HEK293T (cell line): ENCODE measurements at regions of chr7 and their contacts with region 1.

Region 1: DNA sequence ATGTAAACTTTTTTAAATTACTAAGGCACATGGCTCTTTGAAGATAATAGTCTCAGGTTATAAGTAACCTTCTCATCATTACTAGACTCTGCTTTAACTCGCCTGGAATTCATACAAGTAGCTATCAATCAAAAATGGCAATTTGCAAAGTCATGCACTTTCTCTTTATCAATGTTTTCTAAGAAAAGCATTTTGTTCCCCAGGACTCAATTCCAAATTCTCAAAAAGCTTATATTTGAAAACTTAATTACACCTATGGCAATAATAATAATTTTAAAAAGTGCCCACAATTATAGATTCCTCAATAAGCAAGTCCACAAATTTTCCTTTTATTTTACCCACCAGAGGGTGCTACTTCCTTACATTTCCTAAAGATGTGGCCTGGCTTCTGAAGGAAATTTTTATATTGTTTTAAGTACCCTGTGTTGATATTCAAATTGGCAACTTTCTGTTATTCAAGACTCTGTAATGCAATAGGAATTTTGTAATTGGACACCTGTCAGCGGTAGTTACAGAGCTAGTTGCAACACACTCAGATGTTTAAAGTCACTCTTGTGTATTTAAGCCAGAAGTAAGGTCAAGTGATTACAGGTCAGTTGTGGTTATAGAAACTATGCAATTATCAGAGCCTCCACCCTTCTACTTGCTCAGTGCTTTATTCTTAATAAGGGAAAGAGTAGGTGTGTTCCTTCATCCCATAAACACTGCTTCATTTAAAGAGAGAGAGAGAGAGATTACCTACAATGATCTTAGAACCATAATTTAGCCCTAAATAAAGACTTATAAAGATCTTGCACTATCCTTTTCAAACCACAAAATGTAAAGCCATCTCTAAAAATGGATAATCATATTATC is 47.1 kb upstream of the HYAL4 start:
- DNase-seq: peak; percentile 24

Region 2: GRCh38 chr7:123865517-123866117 is 67.7 kb after region 1 on chr7:
- CTCF ChIA-PET with region 1: interaction called, 20 read pairs
- POLR2A ChIA-PET with region 1: no interaction called
- DNase-seq: peak; percentile 44

Region 3: DNA sequence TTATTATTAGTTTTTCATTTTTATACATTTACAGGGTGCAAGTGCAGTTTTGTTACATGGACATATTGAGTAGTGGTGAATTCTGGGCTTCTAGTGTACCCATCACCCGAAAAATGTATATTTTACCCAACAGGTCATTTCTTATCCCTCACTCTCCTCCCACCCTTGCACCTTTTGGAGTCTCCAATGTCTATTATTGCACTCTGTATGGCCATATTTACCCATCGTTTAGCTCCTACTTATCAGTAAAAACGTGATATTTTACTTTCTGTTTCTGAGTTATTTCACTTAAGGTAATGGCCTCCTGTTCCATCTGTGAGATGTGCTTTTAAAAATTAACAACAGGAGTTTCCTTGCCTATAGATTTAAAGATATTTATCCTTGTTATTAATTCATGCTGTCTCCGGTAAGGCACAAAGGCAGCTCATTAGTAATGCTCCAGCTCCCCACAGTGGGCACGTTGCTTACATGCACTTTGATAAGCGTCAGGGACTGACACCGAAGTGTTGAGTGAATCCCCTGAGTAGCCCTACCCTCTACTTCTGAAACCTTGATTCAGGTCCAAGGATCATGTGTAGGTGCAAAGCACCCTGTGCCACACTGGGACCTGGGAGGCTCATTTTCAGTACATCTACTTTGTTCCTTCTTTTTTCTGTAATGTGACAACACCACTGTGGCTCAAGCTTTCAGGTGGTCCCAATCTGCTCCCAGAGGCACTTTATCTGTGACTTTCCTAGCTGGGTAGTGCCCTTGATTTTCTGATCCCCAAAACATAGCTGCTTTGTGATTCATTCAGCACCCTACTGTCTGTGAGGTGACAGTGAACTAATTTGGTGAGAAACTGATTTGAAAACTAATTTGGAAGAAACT is 74.3 kb after region 1 on chr7:
- CTCF ChIA-PET with region 1: interaction called, 15 read pairs
- POLR2A ChIA-PET with region 1: no interaction called
- DNase-seq: peak; percentile 47

Region 4: DNA sequence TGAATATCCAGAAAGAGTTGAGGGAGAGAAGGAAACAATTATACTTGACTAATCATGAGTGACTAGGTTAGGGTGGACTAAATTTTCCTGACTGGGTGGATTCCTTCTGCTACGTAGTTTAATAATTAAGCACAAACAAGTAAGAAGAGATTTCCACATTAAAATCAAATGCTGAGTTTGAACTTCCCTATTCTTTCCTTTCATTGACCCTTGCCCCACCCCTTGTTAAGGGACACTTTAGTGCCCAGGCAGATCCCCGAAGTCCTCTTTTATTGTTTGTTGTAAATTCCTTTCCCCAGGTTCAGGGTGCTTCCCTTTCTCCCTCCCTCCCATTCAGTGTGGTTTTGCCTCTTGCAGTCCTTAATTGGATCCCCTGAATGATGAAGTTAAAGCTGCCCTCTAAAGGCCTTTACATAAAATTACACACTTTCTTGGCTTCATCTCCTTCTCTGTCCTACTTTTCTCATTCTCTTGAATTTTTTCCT is 118.4 kb after region 1 on chr7:
- CTCF ChIA-PET with region 1: interaction called, 11 read pairs
- POLR2A ChIA-PET with region 1: no interaction called
- DNase-seq: peak; percentile 22